Mammary epithelial cell (primary cell): ENCODE measurements at regions of chr14 and their contacts with region 1.

Region 1: DNA sequence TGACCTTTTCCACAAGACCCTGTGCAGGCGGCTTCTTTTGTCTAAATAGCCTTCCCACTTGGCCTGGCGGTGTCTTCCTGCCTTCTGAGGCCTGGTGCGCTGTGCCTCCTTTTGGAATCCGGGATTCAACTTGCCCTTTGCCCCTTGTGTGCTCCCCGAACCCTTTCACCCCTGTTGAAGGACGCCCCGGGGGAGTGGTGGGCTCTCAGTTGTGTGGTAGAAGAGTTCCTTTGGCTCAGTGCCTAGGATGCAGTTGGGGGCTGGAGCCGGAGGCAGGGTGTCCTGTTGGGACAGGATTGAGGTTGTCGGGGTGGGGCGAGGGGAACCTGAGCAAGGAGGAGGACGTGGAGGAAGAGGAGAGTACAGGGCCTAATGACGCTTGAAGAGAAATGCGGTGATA is 34.5 kb downstream of the KLC1 start:
- DNase-seq: no peak
- H3K4me3 ChIP-seq: no peak overlapping the region
- H3K27ac ChIP-seq: no peak overlapping the region
- H3K4me1 ChIP-seq: peaks cover 14% of the 10 kb centered on the region
- H3K27me3 ChIP-seq: no peaks in the 10 kb centered on the region
- CTCF ChIP-seq: no peak

Region 2: DNA sequence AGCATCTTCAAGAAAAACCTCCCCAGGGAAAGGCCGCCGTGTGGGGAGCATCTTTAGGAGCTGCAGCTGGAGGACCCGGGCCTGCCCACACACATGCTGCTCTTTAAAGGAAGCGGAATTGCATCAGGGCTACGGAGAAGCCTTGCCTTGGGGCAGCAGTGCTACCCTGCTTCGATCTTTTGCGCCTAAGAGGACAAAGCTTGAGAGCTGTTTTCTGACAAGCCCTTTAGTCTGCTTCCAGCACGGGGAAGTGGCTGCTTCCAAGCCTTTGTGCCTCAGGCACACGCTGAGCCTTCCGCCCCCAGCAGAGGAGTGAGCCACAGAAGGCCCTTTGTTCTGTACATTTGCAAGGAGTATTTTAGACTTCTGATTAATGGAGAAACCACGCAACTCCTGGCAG is 69.2 kb before region 1 on chr14:
- CTCF ChIA-PET with region 1: no interaction called
- dilution Hi-C with region 1: loop called (anchors 5 kb)
- in situ Hi-C with region 1: no loop called
- intact Hi-C with region 1: no loop called
- DNase-seq: peak; percentile 93
- H3K4me3 ChIP-seq: peak overlapping the region in 1 of 3 experiments; percentile 13
- H3K27ac ChIP-seq: peak overlapping the region; percentile 43
- H3K4me1 ChIP-seq: peaks cover 37% of the 10 kb centered on the region
- H3K27me3 ChIP-seq: no peaks in the 10 kb centered on the region
- CTCF ChIP-seq: no peak

Region 3: GRCh38 chr14:103705118-103705503 is 41.6 kb after region 1 on chr14:
- CTCF ChIA-PET with region 1: no interaction called
- dilution Hi-C with region 1: loop called (anchors 5 kb)
- in situ Hi-C with region 1: no loop called
- intact Hi-C with region 1: no loop called
- DNase-seq: no peak
- H3K4me3 ChIP-seq: no peak overlapping the region
- H3K27ac ChIP-seq: no peak overlapping the region
- H3K4me1 ChIP-seq: peaks cover 16% of the 10 kb centered on the region
- H3K27me3 ChIP-seq: no peaks in the 10 kb centered on the region
- CTCF ChIP-seq: no peak

Region 4: DNA sequence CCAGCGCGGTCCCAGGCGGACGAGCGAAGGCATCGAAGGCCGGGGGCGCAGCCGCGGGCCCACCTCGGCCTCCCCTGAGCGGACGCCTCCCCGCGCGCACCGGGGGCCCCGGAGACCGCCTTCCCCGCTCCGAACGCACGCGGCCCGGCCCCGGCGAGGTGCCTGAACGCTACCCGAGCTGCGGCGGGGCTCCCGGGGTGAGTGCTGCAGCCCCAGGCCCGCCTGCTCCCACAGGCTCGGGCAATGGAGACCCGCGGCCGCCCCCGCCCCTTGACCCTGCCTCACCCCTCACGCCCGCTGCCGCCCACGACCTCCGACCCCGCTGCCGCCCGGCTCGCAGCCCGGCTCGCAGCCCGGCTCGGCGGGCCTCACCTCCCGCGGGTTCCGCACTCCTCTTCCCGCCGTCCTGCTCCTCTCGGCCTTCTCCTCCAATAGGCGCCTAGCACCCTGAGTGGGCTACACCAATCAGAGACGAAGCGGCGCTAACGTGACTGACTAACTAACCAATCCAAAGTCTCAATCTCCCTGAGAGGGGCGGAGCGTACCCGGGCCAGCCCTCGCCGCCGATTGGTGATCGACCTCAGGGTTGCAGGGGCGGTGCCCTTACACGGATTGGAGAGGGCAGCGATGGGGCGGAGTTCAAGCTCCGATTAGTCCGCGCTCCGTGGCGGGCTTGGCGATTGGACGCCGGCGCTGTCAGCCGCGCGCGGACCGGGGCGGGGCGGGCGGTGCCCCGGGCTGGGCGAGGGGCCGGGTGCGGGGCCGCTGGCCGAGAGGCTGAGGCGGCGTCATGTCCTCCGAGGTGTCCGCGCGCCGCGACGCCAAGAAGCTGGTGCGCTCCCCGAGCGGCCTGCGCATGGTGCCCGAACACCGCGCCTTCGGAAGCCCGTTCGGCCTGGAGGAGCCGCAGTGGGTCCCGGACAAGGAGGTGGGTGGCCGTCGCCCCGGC is 51.8 kb after region 1 on chr14 and contains the starts of genes XRCC3 and ZFYVE21:
- CTCF ChIA-PET with region 1: no interaction called
- dilution Hi-C with region 1: no loop called
- in situ Hi-C with region 1: no loop called
- intact Hi-C with region 1: no loop called
- DNase-seq: peak; percentile 99
- H3K4me3 ChIP-seq: peak within 1 kb of the TSS; percentile 73 to 82 (median 80)
- H3K27ac ChIP-seq: peak within 1 kb of the TSS; percentile 51
- H3K4me1 ChIP-seq: peaks cover 39% of the 10 kb centered on the region
- H3K27me3 ChIP-seq: no peaks in the 10 kb centered on the region
- CTCF ChIP-seq: no peak
- total RNA-seq, gene XRCC3: 5.2 to 35.4 TPM
- total RNA-seq, gene ZFYVE21: 64.2 to 65.7 TPM